Posterior vena cava (tissue), 2 donors: ENCODE measurements at regions of chr12 and their contacts with region 1.

Region 1: GRCh38 chr12:112252184-112252583 is 126.8 kb downstream of the TRAFD1 start:
- DNase-seq: no peak

Region 2: GRCh38 chr12:112087055-112087850 is 164.9 kb before region 1 on chr12:
- intact Hi-C with region 1: loop called in 1 of 2 experiments (anchors 10 kb)
- DNase-seq: no peak